ENCODE measurements at regions of chr11 and their contacts with region 1.

Region 1: DNA sequence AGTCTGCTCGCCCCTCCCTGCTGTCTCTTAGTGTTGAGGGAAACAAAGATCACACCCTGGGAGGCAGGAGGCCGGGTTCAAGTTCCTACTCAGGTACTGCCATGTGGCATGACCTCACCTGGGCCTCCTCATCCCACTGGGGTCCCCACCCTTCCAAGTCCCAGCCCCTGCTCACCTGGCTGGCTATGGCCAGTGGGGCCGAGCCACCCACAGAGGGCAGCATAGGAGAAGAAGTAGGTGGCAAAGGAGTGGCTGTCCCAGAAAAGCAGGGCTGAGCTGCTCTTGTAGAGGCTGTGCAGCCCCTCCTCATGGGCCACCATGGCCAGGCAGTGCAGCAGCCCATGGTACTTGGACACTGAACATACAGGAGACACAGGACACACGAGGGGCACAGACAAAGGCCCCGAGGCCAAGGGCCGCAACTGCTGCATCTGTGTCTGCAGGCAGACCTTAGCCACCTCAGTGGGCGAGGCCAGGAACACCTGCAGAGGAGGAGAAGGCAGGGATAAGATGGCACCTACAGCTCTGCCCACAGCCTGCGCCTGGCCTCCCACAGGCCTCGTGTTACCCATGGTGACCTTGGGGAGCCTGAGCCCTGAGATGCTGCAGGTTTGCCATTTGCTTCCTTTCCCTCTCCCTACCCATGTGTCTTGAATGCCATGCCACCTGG is 50.6 kb upstream of the MPEG1 start:
- DNase-seq: peak; percentile 38 to 69 (median 60)
- H3K4me3 ChIP-seq: no peak overlapping the region
- H3K27ac ChIP-seq: no peak overlapping the region
- H3K4me1 ChIP-seq: peaks cover 0 to 14% (median 5%) of the 10 kb centered on the region in 4 experiments
- H3K27me3 ChIP-seq: peaks cover 0 to 3% (median 0%) of the 10 kb centered on the region in 5 experiments

Region 2: GRCh38 chr11:59273373-59273841 is 10.0 kb after region 1 on chr11:
- CTCF ChIA-PET with region 1: interaction called, 64 read pairs
- POLR2A ChIA-PET with region 1: no interaction called
- DNase-seq: peak; percentile 82 to 97 (median 94)
- H3K4me3 ChIP-seq: no peak overlapping the region
- H3K27ac ChIP-seq: peak overlapping the region; percentile 64 to 77
- H3K4me1 ChIP-seq: peaks cover 23 to 47% (median 30%) of the 10 kb centered on the region in 4 experiments
- H3K27me3 ChIP-seq: no peaks in the 10 kb centered on the region

Region 3: DNA sequence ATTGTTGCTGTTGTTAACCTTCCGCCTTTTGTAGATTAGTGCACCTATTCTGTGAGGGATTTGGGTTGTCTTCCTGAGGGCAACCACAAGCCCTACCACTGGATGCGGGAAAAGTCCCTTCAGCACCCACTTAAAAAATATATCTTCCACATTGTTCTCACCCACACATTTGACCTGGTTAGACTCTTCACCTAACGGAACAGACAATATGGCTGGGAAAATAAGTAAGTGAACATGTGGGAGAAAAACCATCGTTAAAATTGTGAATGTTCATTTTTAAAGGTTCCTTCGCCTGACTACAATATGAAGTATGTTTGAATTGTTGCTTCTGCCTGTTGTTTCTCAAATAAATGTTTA is 21.4 kb after region 1 on chr11:
- CTCF ChIA-PET with region 1: interaction called, 22 read pairs
- POLR2A ChIA-PET with region 1: no interaction called
- DNase-seq: no peak
- H3K4me3 ChIP-seq: peak overlapping the region in 1 of 7 experiments; percentile 13
- H3K27ac ChIP-seq: no peak overlapping the region
- H3K4me1 ChIP-seq: peaks cover 0 to 32% (median 11%) of the 10 kb centered on the region in 4 experiments
- H3K27me3 ChIP-seq: no peaks in the 10 kb centered on the region

Region 4: DNA sequence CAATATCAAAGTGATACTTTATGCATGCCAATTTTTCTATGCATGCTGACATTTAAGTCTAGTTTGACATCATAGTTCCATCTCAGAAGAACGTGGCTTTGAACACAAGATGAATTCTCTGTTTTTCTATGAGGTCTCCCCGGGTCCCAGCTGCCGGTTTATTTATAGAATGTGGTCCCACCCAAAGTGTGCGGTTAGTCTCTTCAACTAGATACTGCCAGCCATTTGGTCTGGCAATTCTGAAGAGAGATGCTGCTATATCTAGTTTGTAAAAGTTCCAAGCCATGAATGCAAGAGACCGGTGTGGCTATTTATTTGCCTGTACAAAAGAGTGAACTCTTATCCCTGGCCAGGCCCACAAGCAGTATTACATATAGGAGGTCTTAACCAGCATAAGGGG is 153.7 kb after region 1 on chr11:
- CTCF ChIA-PET with region 1: interaction called, 15 read pairs
- POLR2A ChIA-PET with region 1: no interaction called
- DNase-seq: peak in 1 of 3 donors; percentile 8
- H3K4me3 ChIP-seq: no peak overlapping the region
- H3K27ac ChIP-seq: no peak overlapping the region
- H3K4me1 ChIP-seq: peaks cover 4 to 8% (median 8%) of the 10 kb centered on the region in 4 experiments
- H3K27me3 ChIP-seq: peaks cover 0 to 4% (median 0%) of the 10 kb centered on the region in 5 experiments

Region 5: GRCh38 chr11:59429924-59430516 is 166.7 kb after region 1 on chr11:
- CTCF ChIA-PET with region 1: interaction called, 115 read pairs
- POLR2A ChIA-PET with region 1: no interaction called
- DNase-seq: peak; percentile 72 to 85 (median 79)
- H3K4me3 ChIP-seq: no peak overlapping the region
- H3K27ac ChIP-seq: no peak overlapping the region
- H3K4me1 ChIP-seq: no peaks in the 10 kb centered on the region
- H3K27me3 ChIP-seq: no peaks in the 10 kb centered on the region

Measured in common myeloid progenitor, CD34-positive (primary cell).